Activated CD8-positive, alpha-beta T cell treated with anti-CD3 and anti-CD28 coated beads for 36 hours (primary cell): ENCODE measurements at regions of chr14 and their contacts with region 1.

Region 1: DNA sequence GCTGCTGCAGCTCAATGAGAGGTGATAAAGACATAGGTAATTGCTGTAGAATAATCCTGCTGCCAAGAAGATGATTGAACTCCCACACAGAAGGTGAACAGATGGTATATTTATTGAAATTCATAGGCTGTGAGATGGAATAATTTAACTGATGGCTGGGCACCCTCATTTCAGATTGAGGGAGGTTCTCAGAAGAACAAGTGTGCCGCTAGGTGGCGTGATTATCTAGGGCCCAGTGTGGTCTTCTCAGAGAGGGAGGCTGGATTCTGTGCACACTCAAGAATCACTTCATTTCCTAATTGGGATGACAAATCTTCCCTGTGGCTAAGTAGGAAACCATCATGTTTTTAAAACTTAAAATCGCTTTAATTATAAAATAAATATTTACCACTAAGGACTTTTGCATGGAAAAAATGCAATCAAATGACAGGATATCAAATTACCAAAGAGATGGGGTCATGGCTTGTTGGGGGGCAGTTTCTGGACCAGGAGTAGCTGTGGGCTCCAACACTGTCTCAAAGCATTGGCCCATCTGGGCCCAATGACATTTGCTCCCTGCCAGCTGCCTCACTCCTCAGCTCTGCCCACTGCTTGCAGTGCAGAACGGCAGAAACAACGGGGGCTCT is 132.3 kb downstream of the SNAPC1 start:
- DNase-seq: peak; percentile 82
- ATAC-seq: no peak
- H3K4me3 Mint-ChIP-seq: no peak overlapping the region
- H3K27ac Mint-ChIP-seq: no peak overlapping the region
- H3K4me1 Mint-ChIP-seq: peaks cover 7% of the 10 kb centered on the region
- H3K27me3 Mint-ChIP-seq: peaks cover 3% of the 10 kb centered on the region
- CTCF ChIP-seq: peak; percentile 73

Region 2: DNA sequence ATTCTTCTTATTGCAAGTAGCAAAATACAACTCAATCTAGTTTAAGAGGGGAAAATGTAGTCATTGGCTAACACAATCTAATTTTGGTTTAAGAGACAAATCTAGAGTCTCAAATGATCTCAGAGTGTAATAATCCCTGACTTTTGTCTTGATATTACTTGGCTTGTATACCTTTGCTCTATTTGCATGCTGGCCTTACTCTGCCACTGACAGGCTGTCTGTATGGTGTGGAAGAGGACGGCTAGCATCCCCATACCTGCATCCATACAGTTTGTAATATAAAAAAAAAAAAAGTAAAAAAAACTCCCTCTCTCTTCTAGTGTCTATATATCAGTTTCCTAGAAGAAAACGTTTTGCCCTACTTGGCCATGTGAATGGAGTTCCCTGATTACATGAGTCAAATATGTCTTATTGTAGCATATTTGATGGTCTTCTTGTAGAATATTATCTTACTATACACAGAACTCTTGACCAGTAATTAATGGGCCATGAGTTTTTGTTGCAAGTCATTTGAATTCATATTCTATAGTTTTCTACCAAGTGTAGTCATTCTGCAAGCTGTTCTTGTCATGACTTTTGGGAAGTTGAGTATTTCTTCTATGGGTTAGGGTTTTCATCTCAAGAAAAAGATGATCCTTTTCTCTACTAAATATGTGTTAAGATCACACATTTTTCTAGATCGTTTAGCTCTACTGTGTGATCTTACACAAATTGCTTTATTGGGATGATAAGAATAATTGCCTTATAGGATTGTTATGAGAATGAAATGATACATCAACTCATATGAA is 191.0 kb before region 1 on chr14:
- CTCF ChIA-PET with region 1: no interaction called
- POLR2A ChIA-PET with region 1: no interaction called
- intact Hi-C with region 1: no loop called
- DNase-seq: no peak
- ATAC-seq: peak; percentile 38
- H3K4me3 Mint-ChIP-seq: peak overlapping the region; percentile 24
- H3K27ac Mint-ChIP-seq: peak overlapping the region; percentile 55
- H3K4me1 Mint-ChIP-seq: peaks cover 78% of the 10 kb centered on the region
- H3K27me3 Mint-ChIP-seq: no peaks in the 10 kb centered on the region
- CTCF ChIP-seq: no peak

Region 3: DNA sequence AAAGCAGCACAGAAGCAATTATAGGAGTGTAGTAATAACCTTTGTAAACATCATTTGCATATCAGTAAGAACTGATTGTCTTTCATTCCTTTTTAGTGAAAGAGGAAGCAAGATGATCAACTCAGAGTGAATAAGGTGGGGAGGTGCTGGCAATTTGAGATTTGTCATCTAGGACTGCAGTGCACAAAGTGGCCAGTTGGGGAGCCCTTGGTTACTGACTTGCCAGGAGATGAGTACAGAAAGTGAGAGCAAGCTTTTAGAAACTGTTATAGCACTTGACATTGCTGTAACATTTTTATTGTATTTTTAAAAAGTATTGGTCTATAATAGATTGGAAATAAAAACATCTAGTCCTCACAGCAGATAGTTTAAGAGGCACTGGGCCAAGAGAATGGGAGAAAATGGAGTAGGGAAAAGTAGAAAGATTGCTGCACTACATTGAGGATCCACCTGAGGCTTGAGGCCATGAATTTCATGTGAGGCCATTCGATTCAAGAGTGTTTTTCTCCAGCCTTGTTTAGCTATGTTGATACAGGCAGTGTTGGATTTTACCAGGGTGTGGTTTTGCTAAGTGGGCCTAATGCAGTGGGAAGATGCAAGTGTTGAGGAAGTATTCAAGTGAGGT is 34.2 kb before region 1 on chr14:
- CTCF ChIA-PET with region 1: interaction called, 21 read pairs
- POLR2A ChIA-PET with region 1: no interaction called
- intact Hi-C with region 1: no loop called
- DNase-seq: peak; percentile 89
- ATAC-seq: peak; percentile 100
- H3K4me3 Mint-ChIP-seq: no peak overlapping the region
- H3K27ac Mint-ChIP-seq: no peak overlapping the region
- H3K4me1 Mint-ChIP-seq: no peaks in the 10 kb centered on the region
- H3K27me3 Mint-ChIP-seq: peaks cover 16% of the 10 kb centered on the region
- CTCF ChIP-seq: peak; percentile 93

Region 4: GRCh38 chr14:61950340-61950739 is 55.8 kb after region 1 on chr14:
- CTCF ChIA-PET with region 1: no interaction called
- POLR2A ChIA-PET with region 1: no interaction called
- intact Hi-C with region 1: no loop called
- DNase-seq: no peak
- ATAC-seq: no peak
- H3K4me3 Mint-ChIP-seq: no peak overlapping the region
- H3K27ac Mint-ChIP-seq: no peak overlapping the region
- H3K4me1 Mint-ChIP-seq: no peaks in the 10 kb centered on the region
- H3K27me3 Mint-ChIP-seq: peaks cover 6% of the 10 kb centered on the region
- CTCF ChIP-seq: no peak